Heart right ventricle (tissue), 16 donors: ENCODE measurements at regions of chr4 and their contacts with region 1.

Region 1: GRCh38 chr4:65880594-65880993 is 210.3 kb upstream of the EPHA5 start:
- DNase-seq: no peak
- ATAC-seq: no peak
- H3K4me3 ChIP-seq: no peak overlapping the region
- H3K27ac ChIP-seq: no peak overlapping the region
- H3K4me1 ChIP-seq: no peaks in the 10 kb centered on the region
- H3K27me3 ChIP-seq: no peaks in the 10 kb centered on the region
- CTCF ChIP-seq: no peak

Region 2: DNA sequence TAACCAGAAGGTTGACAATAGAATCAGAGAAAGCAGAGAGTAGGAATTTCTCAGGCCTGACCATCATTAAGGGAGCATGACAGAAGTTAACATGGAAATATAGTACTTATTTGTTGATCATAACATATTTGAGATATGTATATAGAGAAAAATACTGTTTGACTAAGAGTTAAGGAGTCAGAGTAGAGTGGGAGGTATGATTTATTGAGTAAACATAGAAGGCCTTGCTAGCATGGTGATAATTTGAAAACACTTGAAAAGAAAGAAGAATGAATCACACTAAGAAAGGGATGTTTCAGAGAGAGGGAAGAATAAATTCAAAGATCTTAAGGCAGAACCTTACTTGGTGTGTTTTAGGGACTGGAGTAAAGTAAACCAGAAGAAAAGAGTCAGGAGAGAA is 1034.2 kb before region 1 on chr4:
- intact Hi-C with region 1: loop called in 1 of 10 experiments (anchors 5 kb)
- DNase-seq: no peak
- ATAC-seq: no peak
- H3K4me3 ChIP-seq: no peak overlapping the region
- H3K27ac ChIP-seq: no peak overlapping the region
- H3K4me1 ChIP-seq: no peaks in the 10 kb centered on the region
- H3K27me3 ChIP-seq: no peaks in the 10 kb centered on the region
- CTCF ChIP-seq: no peak